GM10248 (cell line): ENCODE measurements at regions of chr1 and their contacts with region 1.

Region 1: DNA sequence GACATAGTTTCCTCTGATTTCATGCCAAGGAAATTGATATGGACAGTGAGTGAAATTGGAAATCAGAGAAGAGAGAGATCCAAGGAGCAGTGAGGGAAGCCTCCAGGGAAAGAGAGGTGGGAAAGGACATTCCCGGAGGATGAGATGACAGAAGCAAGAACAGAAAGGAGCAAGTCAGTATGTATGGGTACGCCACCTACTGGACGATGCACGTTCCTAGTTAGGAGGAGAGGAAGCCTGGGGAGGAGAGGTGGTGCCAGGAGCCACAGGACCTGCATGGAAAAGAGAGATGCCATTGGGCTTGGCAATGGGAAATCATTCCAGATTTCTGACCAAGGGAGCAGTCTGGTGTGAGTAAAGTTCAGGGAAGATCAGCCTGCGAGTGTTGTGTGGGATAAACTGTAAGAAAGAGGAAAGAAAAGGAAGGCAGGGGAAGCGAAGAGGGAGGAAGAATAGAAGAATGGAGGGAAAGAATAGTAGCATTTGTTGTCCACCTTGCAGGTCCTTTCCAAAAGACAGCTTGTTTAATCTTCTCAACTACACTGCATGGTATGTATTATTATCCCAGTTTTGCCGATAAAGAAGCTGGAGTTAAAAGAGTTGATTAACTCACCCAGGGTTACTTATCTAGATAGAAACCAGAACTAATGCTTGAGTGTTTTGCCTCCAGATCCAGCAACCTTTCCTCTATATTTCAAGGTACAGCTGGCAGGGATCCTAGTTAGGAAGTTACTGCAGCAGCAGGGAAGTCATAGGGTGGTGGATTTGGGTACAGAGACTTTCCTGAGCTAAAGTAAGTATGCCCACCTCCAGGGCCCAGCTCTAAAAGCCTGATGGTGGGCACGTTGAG is 27.4 kb downstream of the C1orf116 start:
- DNase-seq: peak; percentile 60
- CTCF ChIP-seq: peak; percentile 85

Region 2: GRCh38 chr1:206935491-206936067 is 69.6 kb before region 1 on chr1:
- CTCF ChIA-PET with region 1: interaction called, 12 read pairs
- POLR2A ChIA-PET with region 1: no interaction called
- DNase-seq: peak; percentile 64
- CTCF ChIP-seq: peak; percentile 49

Region 3: DNA sequence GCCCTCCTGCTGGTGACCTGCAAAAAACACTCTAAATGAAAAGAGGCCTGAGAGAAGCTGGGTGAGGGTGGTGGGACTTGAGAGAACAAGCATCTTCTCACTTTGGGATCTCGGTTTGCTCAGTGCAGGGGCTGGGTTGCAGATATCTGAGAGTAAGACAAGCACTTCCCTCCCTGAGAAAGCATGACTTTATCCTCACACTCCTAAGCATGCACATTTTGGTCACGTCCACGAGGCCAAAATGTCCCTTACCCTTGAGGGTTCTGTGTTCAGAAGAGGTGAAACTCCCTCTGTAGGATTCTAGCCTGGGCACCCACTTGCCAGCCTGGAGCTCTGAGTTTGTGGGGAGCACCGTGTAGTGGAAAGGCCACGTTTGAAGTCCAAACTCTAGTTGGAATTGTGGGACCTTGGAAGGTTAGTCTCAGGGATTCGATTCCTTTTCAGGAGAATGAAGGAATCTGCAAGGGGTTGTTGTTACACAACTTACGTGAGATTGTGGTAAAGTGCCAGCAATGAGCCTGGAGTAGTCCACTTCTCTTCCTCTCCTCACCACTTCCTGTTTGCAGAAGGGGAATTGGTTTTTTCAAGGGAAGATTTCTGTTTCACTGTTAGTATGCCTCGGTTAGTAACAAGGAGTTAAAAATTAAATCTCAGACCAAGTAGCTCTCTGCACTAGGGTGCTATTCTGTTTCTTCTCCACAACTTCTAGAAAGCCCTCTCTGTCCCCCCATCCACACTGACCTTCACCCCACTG is 37.9 kb before region 1 on chr1:
- CTCF ChIA-PET with region 1: interaction called, 12 read pairs
- POLR2A ChIA-PET with region 1: no interaction called
- DNase-seq: peak; percentile 41
- CTCF ChIP-seq: no peak

Region 4: DNA sequence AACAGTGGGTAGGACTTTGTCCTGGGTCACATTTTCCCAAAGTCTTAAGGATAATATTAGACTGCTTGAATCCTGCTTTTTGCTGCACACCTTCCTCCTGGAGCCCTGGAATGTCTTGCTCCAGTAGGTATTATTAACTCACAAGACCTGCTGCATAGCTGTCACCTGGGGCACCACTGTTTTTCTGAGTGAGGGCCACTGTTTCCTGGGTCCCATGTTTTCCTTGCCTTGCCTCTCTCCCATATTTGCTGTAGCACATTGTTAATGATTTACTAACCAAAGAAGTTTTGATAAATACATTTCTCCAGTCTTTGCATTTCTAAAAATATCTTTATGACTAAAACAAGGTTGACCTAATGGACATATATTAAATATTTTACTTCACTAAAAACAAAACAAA is 12.4 kb before region 1 on chr1:
- CTCF ChIA-PET with region 1: interaction called, 25 read pairs
- POLR2A ChIA-PET with region 1: no interaction called
- DNase-seq: no peak
- CTCF ChIP-seq: no peak

Region 5: GRCh38 chr1:207015791-207016190 is 10.6 kb after region 1 on chr1:
- CTCF ChIA-PET with region 1: interaction called, 60 read pairs
- POLR2A ChIA-PET with region 1: no interaction called
- DNase-seq: no peak
- CTCF ChIP-seq: no peak

Region 6: DNA sequence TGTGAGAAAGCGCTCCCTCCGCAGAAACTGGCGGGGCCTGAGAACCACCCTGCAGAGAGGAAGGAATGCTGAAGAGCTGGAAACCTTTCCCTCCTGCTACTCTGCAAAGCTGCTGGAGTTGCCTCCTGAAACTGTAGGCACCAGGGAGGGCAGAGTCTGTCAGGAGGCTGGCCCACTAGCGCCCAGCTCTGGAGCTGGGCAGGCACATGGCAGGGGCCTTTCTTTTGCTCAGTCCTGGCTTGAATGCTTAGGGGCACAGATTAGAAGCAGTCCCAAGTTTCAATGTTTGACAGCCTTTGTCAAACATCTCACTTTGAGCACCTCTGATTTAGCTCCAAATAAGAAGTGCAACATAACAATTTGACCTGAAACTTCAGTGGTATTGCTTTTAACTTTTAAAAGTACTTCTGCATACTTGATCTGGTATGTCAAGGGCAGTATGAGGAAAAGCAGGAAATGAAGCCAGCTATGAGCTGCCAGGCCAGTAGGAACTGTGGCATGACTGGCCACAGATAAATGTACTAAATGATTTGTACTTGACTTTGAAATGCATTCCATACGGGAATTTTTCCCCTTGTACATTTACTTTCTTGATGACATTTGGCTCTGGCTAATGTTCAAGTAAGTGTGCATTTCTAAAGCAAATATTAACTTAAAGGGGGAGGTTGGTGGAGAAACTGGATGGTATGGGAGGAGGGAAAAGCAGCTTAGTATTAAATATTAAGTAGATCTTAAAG is 20.1 kb after region 1 on chr1:
- CTCF ChIA-PET with region 1: interaction called, 60 read pairs
- POLR2A ChIA-PET with region 1: no interaction called
- DNase-seq: no peak
- CTCF ChIP-seq: no peak

Region 7: GRCh38 chr1:207032528-207033017 is 27.4 kb after region 1 on chr1 and contains the start of gene C1orf116:
- CTCF ChIA-PET with region 1: interaction called, 25 read pairs
- POLR2A ChIA-PET with region 1: no interaction called
- DNase-seq: no peak
- CTCF ChIP-seq: no peak